Heart right ventricle (tissue), 16 donors: ENCODE measurements at regions of chr4 and their contacts with region 1.

Region 1: GRCh38 chr4:140609548-140610425 is 41.0 kb upstream of the UCP1 start:
- DNase-seq: no peak
- ATAC-seq: peak; percentile 74 to 90 (median 86)
- H3K4me3 ChIP-seq: peak overlapping the region in 1 of 10 donors; percentile 4
- H3K27ac ChIP-seq: peak overlapping the region in 8 of 10 donors; percentile 17 to 75 (median 39)
- H3K4me1 ChIP-seq: peaks cover 0 to 14% (median 4%) of the 10 kb centered on the region in 9 donors
- H3K27me3 ChIP-seq: no peaks in the 10 kb centered on the region
- CTCF ChIP-seq: peak; percentile 42 to 74 (median 62)

Region 2: GRCh38 chr4:140359562-140360427 is 250.0 kb before region 1 on chr4:
- intact Hi-C with region 1: loop called (anchors 1 to 10 kb)
- DNase-seq: peak; percentile 29 to 69
- ATAC-seq: peak; percentile 59 to 89 (median 82)
- H3K4me3 ChIP-seq: no peak overlapping the region
- H3K27ac ChIP-seq: no peak overlapping the region
- H3K4me1 ChIP-seq: peaks cover 0 to 7% (median 0%) of the 10 kb centered on the region in 9 donors
- H3K27me3 ChIP-seq: peaks cover 0 to 7% (median 0%) of the 10 kb centered on the region in 7 donors
- CTCF ChIP-seq: peak; percentile 58 to 85 (median 77)